A673 (cell line): ENCODE measurements at regions of chr4 and their contacts with region 1.

Region 1: DNA sequence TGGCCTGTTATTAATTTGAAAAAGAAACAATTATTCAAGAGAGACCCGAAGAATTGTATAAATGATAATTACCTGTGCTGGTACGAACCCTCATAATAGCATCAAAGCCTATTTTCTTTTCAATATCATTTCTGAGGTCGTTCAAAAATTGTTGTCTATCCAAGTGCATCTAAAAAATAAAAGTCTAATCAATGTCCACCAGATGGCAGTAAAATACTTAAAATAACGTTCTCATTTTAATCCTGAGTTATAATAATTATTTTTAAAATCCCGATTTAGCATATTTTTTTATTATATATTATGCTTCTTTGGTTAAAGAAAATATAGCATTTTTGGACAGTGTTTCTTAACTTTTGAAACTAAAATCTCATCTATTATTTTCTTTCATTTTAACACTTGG is 55.7 kb downstream of the METTL14 start:
- DNase-seq: peak; percentile 49
- H3K4me3 ChIP-seq: no peak overlapping the region
- H3K27ac ChIP-seq: no peak overlapping the region
- H3K4me1 ChIP-seq: no peaks in the 10 kb centered on the region
- H3K27me3 ChIP-seq: no peaks in the 10 kb centered on the region
- CTCF ChIP-seq: peak; percentile 61

Region 2: GRCh38 chr4:118888666-118889311 is 147.9 kb after region 1 on chr4 and contains the start of gene SYNPO2:
- CTCF ChIA-PET with region 1: no interaction called
- POLR2A ChIA-PET with region 1: no interaction called
- intact Hi-C with region 1: loop called (anchors 2 kb)
- DNase-seq: peak; percentile 81
- H3K4me3 ChIP-seq: peak within 1 kb of the TSS; percentile 40
- H3K27ac ChIP-seq: no peak within 1 kb of the TSS
- H3K4me1 ChIP-seq: peaks cover 11% of the 10 kb centered on the region
- H3K27me3 ChIP-seq: no peaks in the 10 kb centered on the region
- CTCF ChIP-seq: no peak
- total RNA-seq, gene SYNPO2: 0.20 and 0.26 TPM in 2 replicates

Region 3: GRCh38 chr4:118968005-118968404 is 227.1 kb after region 1 on chr4:
- CTCF ChIA-PET with region 1: interaction called, 5 read pairs
- POLR2A ChIA-PET with region 1: no interaction called
- intact Hi-C with region 1: loop called (anchors 2 kb)
- DNase-seq: no peak
- H3K4me3 ChIP-seq: no peak overlapping the region
- H3K27ac ChIP-seq: no peak overlapping the region
- H3K4me1 ChIP-seq: no peaks in the 10 kb centered on the region
- H3K27me3 ChIP-seq: no peaks in the 10 kb centered on the region
- CTCF ChIP-seq: no peak

Region 4: DNA sequence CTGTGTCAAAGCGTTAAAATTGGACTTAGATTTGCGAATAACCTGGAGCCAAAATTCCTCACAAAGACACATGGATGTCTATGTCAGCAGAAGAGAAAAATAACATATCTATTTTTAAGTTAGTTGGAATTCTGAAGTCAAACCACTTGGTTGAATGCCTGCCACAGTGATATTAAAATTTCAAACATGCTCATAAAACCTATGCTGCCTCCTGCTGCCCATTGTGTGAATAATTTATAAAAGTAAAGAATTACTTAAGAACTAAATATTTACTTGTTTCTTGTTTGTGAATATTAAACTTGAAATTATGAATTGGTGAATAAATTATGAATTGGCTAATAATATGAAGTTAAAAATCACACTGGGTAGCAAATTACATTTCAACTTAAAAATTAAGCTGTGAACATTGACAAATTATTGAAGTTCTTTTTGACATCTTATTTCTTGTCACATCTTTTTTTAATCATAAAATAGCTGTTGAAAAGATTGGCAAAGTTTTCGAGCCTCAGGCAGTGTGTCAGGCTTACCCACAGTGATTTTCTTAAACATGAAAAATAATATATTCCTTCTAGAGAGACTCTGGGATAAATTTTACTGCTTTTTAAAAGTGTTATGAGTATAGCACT is 545.6 kb after region 1 on chr4:
- CTCF ChIA-PET with region 1: no interaction called
- POLR2A ChIA-PET with region 1: no interaction called
- intact Hi-C with region 1: loop called (anchors 10 kb)
- DNase-seq: peak; percentile 73
- H3K4me3 ChIP-seq: no peak overlapping the region
- H3K27ac ChIP-seq: no peak overlapping the region
- H3K4me1 ChIP-seq: peaks cover 12% of the 10 kb centered on the region
- H3K27me3 ChIP-seq: no peaks in the 10 kb centered on the region
- CTCF ChIP-seq: peak; percentile 73